Naive thymus-derived CD4-positive, alpha-beta T cell (primary cell): ENCODE measurements at regions of chr9 and their contacts with region 1.

Region 1: DNA sequence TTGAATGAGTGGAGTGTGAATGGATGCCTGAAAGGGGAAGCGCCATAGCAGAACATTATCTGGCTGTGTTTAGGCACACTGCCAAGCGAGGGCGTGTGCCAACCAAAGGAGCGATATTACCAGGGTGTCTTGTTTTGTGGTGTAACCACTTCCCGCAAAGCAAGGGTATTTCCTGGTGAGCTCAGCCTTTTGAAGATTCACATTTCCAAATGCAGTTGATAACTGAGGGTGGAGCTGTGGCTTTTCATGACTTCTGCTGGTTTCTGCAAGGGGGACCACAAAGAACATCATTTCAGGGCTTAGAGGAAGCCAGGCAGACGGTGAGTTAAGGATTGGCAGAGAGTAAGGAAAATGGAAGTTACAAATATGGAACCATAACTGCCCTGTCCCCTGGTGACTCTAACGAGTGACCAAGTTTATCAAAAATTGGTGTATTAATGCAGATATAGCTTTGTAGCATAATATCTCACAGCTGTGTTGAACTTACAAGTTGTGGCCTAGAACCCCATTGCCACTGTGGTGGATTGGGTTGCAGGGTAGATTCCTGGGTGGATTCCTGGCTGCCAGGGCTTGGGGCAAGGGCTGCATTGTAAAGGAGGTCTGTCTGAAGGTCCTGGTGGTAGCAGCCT is 71.4 kb downstream of the RALGPS1 start:
- DNase-seq: peak; percentile 57 to 97 (median 95)
- ATAC-seq: peak; percentile 92
- H3K4me3 ChIP-seq: peak overlapping the region; percentile 5
- H3K4me3 Mint-ChIP-seq: peak overlapping the region; percentile 58 to 88 (median 76)
- H3K27ac ChIP-seq: no peak overlapping the region
- H3K27ac Mint-ChIP-seq: peak overlapping the region; percentile 44 to 91 (median 81)
- H3K4me1 ChIP-seq: peaks cover 43 to 72% of the 10 kb centered on the region in 2 donors
- H3K4me1 Mint-ChIP-seq: peaks cover 53 to 69% (median 63%) of the 10 kb centered on the region in 7 donors
- H3K27me3 ChIP-seq: peaks cover 0 to 4% of the 10 kb centered on the region in 2 donors
- H3K27me3 Mint-ChIP-seq: peaks cover 56 to 86% (median 70%) of the 10 kb centered on the region in 5 donors

Region 2: DNA sequence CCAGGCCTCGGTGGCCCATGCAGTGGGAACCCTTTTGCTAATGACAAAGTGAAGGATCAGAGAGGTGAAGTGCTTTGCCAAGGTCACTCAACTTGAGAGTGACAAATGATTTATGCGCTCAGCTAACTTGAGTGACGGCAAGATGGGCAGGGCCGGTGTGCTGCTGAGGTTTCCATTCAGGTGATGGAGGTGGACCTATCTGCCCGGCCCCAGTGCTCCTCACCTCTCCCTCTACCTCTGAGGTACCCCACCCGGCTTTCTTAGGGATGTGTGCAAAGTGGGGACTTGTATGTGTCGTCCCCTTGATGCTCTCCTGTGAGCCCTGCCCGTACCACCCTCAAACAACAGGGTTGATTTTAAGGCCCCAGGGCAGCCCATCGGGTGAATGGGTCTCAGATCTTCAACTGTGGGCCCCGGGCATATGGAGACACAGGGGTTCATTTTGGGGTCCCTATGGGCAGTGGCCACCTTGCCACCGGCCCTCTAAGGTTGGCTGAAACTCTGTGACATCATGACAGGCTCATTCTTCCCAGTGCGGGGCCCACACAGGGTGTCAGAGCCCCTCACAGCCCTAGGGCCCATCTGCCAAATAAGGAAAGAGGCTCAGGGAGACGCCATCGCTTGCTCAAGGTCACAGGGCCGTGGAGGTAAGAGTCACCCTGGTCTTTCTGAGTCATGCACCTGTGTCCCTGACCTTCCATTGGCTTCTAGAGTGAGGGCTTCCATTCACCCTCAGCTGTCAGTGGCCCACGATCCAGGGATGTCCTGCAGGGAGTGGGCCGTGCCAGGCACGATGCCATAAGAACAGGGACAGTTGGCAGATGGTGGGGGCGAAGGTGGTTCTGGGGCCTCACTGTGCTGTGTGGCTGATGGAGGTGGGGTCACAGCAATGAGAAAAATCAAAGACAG is 830.0 kb before region 1 on chr9:
- CTCF ChIA-PET with region 1: no interaction called
- POLR2A ChIA-PET with region 1: no interaction called
- intact Hi-C with region 1: no loop called
- DNase-seq: no peak
- ATAC-seq: no peak
- H3K4me3 ChIP-seq: no peak overlapping the region
- H3K4me3 Mint-ChIP-seq: no peak overlapping the region
- H3K27ac ChIP-seq: no peak overlapping the region
- H3K27ac Mint-ChIP-seq: no peak overlapping the region
- H3K4me1 ChIP-seq: no peaks in the 10 kb centered on the region
- H3K4me1 Mint-ChIP-seq: peaks cover 0 to 2% (median 0%) of the 10 kb centered on the region in 7 donors
- H3K27me3 ChIP-seq: no peaks in the 10 kb centered on the region
- H3K27me3 Mint-ChIP-seq: peaks cover 0 to 36% (median 10%) of the 10 kb centered on the region in 5 donors

Region 3: GRCh38 chr9:126860077-126860756 is 125.8 kb before region 1 on chr9 and contains the start of gene ZBTB34:
- CTCF ChIA-PET with region 1: no interaction called
- POLR2A ChIA-PET with region 1: interaction called, 3 read pairs
- intact Hi-C with region 1: loop called in 1 of 2 experiments (anchors 5 kb)
- DNase-seq: peak; percentile 67 to 92 (median 82)
- ATAC-seq: peak; percentile 91
- H3K4me3 ChIP-seq: peak within 1 kb of the TSS; percentile 65
- H3K4me3 Mint-ChIP-seq: peak within 1 kb of the TSS; percentile 84 to 94 (median 90)
- H3K27ac ChIP-seq: peak within 1 kb of the TSS; percentile 84
- H3K27ac Mint-ChIP-seq: peak within 1 kb of the TSS; percentile 68 to 92 (median 85)
- H3K4me1 ChIP-seq: peaks cover 10 to 25% of the 10 kb centered on the region in 2 donors
- H3K4me1 Mint-ChIP-seq: peaks cover 18 to 40% (median 30%) of the 10 kb centered on the region in 7 donors
- H3K27me3 ChIP-seq: no peaks in the 10 kb centered on the region
- H3K27me3 Mint-ChIP-seq: peaks cover 0 to 38% (median 6%) of the 10 kb centered on the region in 5 donors
- total RNA-seq, gene ZBTB34: 5.2 to 9.4 (median 8.8) TPM

Region 4: DNA sequence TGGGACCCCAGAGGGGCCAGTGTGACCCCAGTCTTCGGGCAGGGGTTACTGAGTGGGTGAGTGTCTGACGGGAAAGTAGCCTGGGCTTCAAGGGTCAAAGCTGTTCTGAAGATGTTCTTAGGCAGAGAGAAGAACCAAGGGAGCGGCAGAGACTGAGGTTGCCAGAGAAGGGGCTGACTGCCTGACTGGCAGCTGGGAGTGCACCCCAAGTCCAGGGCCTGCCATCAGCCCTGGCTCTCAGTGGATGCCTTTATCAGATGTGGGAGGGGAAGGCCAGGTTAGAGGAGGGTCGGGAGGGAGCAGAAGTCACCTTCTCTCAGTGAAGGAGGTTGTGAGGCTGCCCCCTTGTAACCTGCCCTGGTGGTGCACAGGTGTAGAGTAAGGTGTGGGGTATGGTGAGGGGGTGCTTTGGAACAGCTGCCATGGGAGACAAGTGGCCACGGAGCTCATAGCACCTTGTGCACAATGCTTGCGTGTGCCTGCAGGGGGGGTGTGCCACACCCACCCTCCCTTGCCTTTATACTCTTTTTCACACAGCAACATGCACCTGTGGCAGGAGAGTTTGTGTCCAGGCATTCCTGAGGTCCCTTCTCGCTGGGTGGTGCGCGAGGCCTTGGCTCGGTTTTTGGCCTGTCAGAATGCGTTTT is 52.5 kb before region 1 on chr9:
- CTCF ChIA-PET with region 1: no interaction called
- POLR2A ChIA-PET with region 1: no interaction called
- intact Hi-C with region 1: no loop called
- DNase-seq: no peak
- ATAC-seq: no peak
- H3K4me3 ChIP-seq: no peak overlapping the region
- H3K4me3 Mint-ChIP-seq: no peak overlapping the region
- H3K27ac ChIP-seq: no peak overlapping the region
- H3K27ac Mint-ChIP-seq: no peak overlapping the region
- H3K4me1 ChIP-seq: no peaks in the 10 kb centered on the region
- H3K4me1 Mint-ChIP-seq: peaks cover 0 to 5% (median 0%) of the 10 kb centered on the region in 7 donors
- H3K27me3 ChIP-seq: no peaks in the 10 kb centered on the region
- H3K27me3 Mint-ChIP-seq: peaks cover 0 to 30% (median 0%) of the 10 kb centered on the region in 5 donors

Region 5: DNA sequence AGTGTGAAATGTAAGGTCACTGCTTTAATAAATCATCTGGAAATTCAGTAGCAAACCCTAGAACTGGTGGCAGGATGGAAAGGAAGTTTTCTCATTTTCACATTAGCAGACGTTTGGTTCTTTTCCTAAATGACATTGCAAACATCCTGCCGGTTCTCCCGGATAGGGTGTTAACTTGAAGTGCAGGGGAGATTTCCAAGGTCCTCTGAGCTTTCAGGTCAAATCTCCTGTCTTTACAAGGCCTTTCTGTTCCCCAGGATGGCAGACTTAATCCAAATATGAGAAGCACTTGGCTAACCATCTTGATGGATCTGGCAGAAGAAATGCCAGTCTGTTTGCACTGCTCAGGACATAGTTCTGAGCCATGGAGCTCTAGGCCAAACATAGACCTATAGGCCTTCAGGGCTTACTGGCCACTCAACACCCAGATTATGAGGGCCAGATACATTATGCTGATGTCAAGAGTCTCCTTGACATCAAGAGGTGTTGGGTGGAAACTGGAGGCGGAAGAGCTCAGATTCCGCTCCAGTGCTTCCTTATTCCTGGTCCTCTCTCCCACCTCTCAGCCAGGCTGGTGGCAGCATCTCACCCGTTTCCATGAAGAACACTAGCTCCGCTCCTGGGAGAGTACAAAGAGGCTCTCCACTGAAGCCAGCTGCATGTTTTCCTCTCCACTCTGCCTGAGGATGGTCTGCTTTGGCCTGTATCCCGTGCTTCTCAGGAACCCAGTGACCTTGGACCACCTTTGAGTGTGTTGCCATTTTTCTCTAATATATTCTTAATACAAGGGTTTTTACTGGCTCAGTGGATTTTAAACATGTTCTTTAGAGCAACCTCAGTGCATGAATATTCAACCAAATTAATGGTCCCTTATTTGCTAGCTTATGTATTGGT is 10.4 kb before region 1 on chr9:
- CTCF ChIA-PET with region 1: no interaction called
- POLR2A ChIA-PET with region 1: no interaction called
- intact Hi-C with region 1: loop called in 1 of 2 experiments (anchors 1 kb)
- DNase-seq: no peak
- ATAC-seq: no peak
- H3K4me3 ChIP-seq: no peak overlapping the region
- H3K4me3 Mint-ChIP-seq: no peak overlapping the region
- H3K27ac ChIP-seq: no peak overlapping the region
- H3K27ac Mint-ChIP-seq: no peak overlapping the region
- H3K4me1 ChIP-seq: no peaks in the 10 kb centered on the region
- H3K4me1 Mint-ChIP-seq: peaks cover 2 to 8% (median 4%) of the 10 kb centered on the region in 7 donors
- H3K27me3 ChIP-seq: peaks cover 0 to 3% of the 10 kb centered on the region in 2 donors
- H3K27me3 Mint-ChIP-seq: peaks cover 17 to 56% (median 24%) of the 10 kb centered on the region in 5 donors

Region 6: DNA sequence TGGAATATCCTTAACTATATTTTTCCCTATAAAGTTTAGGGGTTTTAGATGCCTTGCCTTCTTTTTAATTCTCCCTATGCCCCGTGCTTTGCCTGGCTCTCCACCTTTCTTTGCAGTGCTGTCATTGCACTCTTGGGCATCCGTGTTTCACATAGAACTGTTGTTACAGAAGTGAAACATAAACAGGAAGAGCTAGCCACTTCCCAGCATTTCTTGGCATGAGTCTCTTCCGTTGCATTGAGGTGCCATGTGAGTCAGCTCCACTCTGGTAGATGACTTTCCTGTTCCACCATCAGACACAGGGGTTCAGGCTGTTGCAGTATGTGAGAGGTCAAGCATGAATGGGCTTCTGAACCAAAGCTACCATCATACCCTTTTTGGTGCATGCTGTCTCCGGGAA is 63.1 kb after region 1 on chr9:
- CTCF ChIA-PET with region 1: no interaction called
- POLR2A ChIA-PET with region 1: no interaction called
- intact Hi-C with region 1: loop called (anchors 1 to 10 kb)
- DNase-seq: peak in 5 of 9 donors; percentile 4 to 30 (median 21)
- ATAC-seq: peak; percentile 90
- H3K4me3 ChIP-seq: no peak overlapping the region
- H3K4me3 Mint-ChIP-seq: peak overlapping the region in 7 of 10 donors; percentile 7 to 82 (median 34)
- H3K27ac ChIP-seq: no peak overlapping the region
- H3K27ac Mint-ChIP-seq: peak overlapping the region in 2 of 9 donors; percentile 21 to 83
- H3K4me1 ChIP-seq: peaks cover 0 to 21% of the 10 kb centered on the region in 2 donors
- H3K4me1 Mint-ChIP-seq: peaks cover 14 to 42% (median 20%) of the 10 kb centered on the region in 7 donors
- H3K27me3 ChIP-seq: no peaks in the 10 kb centered on the region
- H3K27me3 Mint-ChIP-seq: peaks cover 0 to 10% (median 0%) of the 10 kb centered on the region in 5 donors

Region 7: DNA sequence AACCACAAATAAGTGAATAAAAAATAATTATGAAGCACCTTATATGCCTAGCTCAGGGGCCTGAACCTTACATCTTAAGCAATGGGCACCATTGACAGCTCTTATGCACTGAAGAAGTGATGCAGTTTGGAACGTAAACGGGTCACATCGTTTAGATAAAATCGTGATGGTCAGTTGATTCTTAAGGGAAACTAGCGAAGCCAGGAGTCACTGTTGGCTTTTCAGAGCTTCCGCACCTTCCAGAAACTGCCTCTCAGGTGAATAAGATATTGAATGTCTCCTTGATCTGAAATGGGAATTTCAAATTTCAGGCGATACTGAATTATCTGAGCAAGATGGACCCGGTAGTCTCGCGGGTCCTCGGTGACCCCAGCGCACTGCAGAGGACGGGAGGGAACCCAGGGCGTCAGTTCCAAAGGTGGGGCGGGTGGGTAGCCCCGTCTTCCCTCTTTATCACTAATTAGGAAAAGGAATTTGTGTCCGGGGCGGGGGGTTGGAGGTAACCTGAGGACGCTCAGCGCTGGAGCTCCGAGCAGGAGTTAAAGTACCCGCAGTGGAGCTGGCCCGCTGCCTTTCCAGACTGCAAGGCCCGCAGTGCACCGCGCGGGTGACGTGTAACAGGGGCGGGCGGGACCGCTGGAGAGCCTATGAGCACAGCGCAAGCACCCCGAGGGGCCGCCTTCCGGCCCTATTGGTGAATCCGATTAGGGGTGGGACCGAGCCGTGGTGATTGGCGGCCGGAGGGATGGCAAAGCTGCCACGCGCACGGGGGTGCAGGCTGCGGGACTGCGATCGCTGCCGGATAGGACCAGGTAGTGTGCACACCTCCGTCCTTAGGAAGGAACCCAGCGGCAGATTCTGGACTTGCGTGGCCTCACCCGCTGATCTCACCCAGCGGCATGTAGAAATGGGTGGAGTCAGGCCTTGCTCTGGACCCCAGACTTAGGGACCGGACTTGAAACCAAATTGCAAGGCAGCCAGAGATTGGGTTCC is 258.9 kb after region 1 on chr9:
- CTCF ChIA-PET with region 1: no interaction called
- POLR2A ChIA-PET with region 1: no interaction called
- intact Hi-C with region 1: loop called in 1 of 2 experiments (anchors 1 kb)
- DNase-seq: peak; percentile 84 to 94 (median 91)
- ATAC-seq: peak; percentile 100
- H3K4me3 ChIP-seq: peak overlapping the region; percentile 85
- H3K4me3 Mint-ChIP-seq: peak overlapping the region; percentile 80 to 92 (median 88)
- H3K27ac ChIP-seq: no peak overlapping the region
- H3K27ac Mint-ChIP-seq: peak overlapping the region in 7 of 9 donors; percentile 28 to 80 (median 59)
- H3K4me1 ChIP-seq: peaks cover 0 to 5% of the 10 kb centered on the region in 2 donors
- H3K4me1 Mint-ChIP-seq: peaks cover 4 to 16% (median 8%) of the 10 kb centered on the region in 7 donors
- H3K27me3 ChIP-seq: no peaks in the 10 kb centered on the region
- H3K27me3 Mint-ChIP-seq: peaks cover 0 to 24% (median 4%) of the 10 kb centered on the region in 5 donors